ENCODE measurements at regions of chr11 and their contacts with region 1.

Region 1: GRCh38 chr11:47176328-47177228 is at the start of gene ARFGAP2:
- DNase-seq: peak; percentile 93 to 98 (median 96)
- ATAC-seq: peak; percentile 91
- H3K4me3 ChIP-seq: peak within 1 kb of the TSS; percentile 97 to 100
- H3K4me3 Mint-ChIP-seq: peak within 1 kb of the TSS; percentile 94
- H3K27ac ChIP-seq: peak within 1 kb of the TSS; percentile 95 to 98
- H3K27ac Mint-ChIP-seq: peak within 1 kb of the TSS; percentile 98
- H3K4me1 ChIP-seq: peaks cover 28% of the 10 kb centered on the region
- H3K4me1 Mint-ChIP-seq: peaks cover 41% of the 10 kb centered on the region
- H3K27me3 ChIP-seq: no peaks in the 10 kb centered on the region
- H3K27me3 Mint-ChIP-seq: no peaks in the 10 kb centered on the region
- CTCF ChIP-seq: no peak
- total RNA-seq, gene ARFGAP2: 194 to 215 TPM

Region 2: GRCh38 chr11:46593550-46594373 is 582.8 kb before region 1 on chr11 and contains the start of gene AMBRA1:
- CTCF ChIA-PET with region 1: no interaction called
- POLR2A ChIA-PET with region 1: no interaction called
- intact Hi-C with region 1: loop called in 1 of 2 experiments (anchors 10 kb)
- DNase-seq: peak; percentile 70 to 91 (median 81)
- ATAC-seq: peak; percentile 90
- H3K4me3 ChIP-seq: peak within 1 kb of the TSS; percentile 67 to 80
- H3K4me3 Mint-ChIP-seq: peak within 1 kb of the TSS; percentile 98
- H3K27ac ChIP-seq: peak within 1 kb of the TSS; percentile 57 to 67
- H3K27ac Mint-ChIP-seq: peak within 1 kb of the TSS; percentile 96
- H3K4me1 ChIP-seq: peaks cover 32% of the 10 kb centered on the region
- H3K4me1 Mint-ChIP-seq: peaks cover 43% of the 10 kb centered on the region
- H3K27me3 ChIP-seq: no peaks in the 10 kb centered on the region
- H3K27me3 Mint-ChIP-seq: no peaks in the 10 kb centered on the region
- CTCF ChIP-seq: no peak
- total RNA-seq, gene AMBRA1: 31.2 to 34.1 TPM

Region 3: GRCh38 chr11:46686886-46687795 is 489.4 kb before region 1 on chr11:
- CTCF ChIA-PET with region 1: no interaction called
- POLR2A ChIA-PET with region 1: no interaction called
- intact Hi-C with region 1: no loop called
- DNase-seq: no peak
- ATAC-seq: no peak
- H3K4me3 ChIP-seq: no peak overlapping the region
- H3K4me3 Mint-ChIP-seq: no peak overlapping the region
- H3K27ac ChIP-seq: no peak overlapping the region
- H3K27ac Mint-ChIP-seq: peak overlapping the region; percentile 57
- H3K4me1 ChIP-seq: no peaks in the 10 kb centered on the region
- H3K4me1 Mint-ChIP-seq: peaks cover 12% of the 10 kb centered on the region
- H3K27me3 ChIP-seq: no peaks in the 10 kb centered on the region
- H3K27me3 Mint-ChIP-seq: no peaks in the 10 kb centered on the region
- CTCF ChIP-seq: no peak

Region 4: DNA sequence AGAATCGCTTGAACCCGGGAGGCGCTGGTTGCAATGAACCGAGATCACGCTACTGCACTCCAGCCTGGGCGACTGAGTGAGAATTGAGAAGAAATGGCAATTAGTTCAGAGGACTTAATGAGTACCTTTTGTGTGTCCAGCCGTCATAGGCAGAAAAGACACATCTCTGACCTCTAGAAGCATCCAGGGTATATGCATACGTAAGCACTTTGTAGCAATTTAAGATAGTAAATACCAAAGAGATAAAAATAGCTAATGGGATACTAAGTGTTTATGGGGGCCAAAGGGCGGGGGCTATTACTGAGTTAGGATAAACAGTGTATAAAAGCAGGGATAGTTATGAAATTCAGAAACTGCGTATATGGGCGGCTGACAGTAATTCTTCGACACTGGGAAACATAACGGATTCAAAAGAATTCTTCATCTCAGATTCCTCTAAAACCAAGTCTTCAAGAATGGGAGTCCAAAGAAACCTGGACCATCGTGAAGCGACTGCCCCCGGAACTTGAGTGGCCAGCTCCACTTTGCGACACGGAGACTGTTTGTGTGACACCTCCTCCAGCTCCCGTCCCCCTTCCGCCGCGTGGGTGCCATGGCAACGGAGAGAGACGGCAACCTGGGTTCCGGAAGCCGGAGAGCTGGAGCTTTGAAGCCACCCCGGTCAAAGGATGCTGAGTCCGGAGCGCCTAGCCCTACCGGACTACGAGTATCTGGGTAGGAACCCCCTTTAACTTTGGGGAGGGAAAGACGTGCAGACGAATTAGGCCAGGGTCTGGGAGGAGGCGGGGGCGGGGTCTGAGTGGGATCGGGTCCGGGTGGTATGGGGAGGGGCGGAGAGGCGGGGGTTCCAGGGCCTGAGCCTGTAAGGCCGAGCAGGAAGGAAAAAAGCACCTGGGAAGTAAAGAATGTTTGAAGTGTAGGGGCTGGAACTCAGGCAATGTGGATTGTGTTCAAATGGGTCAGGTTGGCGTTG is 240.2 kb before region 1 on chr11 and contains the start of gene CSTPP1:
- CTCF ChIA-PET with region 1: no interaction called
- POLR2A ChIA-PET with region 1: no interaction called
- intact Hi-C with region 1: loop called in 1 of 2 experiments (anchors 2 kb)
- DNase-seq: peak; percentile 80 to 97 (median 93)
- ATAC-seq: peak; percentile 96
- H3K4me3 ChIP-seq: peak within 1 kb of the TSS; percentile 73 to 82
- H3K4me3 Mint-ChIP-seq: peak within 1 kb of the TSS; percentile 97
- H3K27ac ChIP-seq: peak within 1 kb of the TSS; percentile 58 to 71
- H3K27ac Mint-ChIP-seq: peak within 1 kb of the TSS; percentile 95
- H3K4me1 ChIP-seq: peaks cover 9% of the 10 kb centered on the region
- H3K4me1 Mint-ChIP-seq: peaks cover 20% of the 10 kb centered on the region
- H3K27me3 ChIP-seq: no peaks in the 10 kb centered on the region
- H3K27me3 Mint-ChIP-seq: peaks cover 6% of the 10 kb centered on the region
- CTCF ChIP-seq: no peak
- total RNA-seq, gene CSTPP1: 4.1 to 4.6 TPM

Region 5: GRCh38 chr11:47044112-47044511 is 132.5 kb before region 1 on chr11:
- CTCF ChIA-PET with region 1: no interaction called
- POLR2A ChIA-PET with region 1: no interaction called
- intact Hi-C with region 1: no loop called
- DNase-seq: no peak
- ATAC-seq: no peak
- H3K4me3 ChIP-seq: no peak overlapping the region
- H3K4me3 Mint-ChIP-seq: no peak overlapping the region
- H3K27ac ChIP-seq: no peak overlapping the region
- H3K27ac Mint-ChIP-seq: no peak overlapping the region
- H3K4me1 ChIP-seq: no peaks in the 10 kb centered on the region
- H3K4me1 Mint-ChIP-seq: no peaks in the 10 kb centered on the region
- H3K27me3 ChIP-seq: no peaks in the 10 kb centered on the region
- H3K27me3 Mint-ChIP-seq: no peaks in the 10 kb centered on the region
- CTCF ChIP-seq: no peak

Region 6: DNA sequence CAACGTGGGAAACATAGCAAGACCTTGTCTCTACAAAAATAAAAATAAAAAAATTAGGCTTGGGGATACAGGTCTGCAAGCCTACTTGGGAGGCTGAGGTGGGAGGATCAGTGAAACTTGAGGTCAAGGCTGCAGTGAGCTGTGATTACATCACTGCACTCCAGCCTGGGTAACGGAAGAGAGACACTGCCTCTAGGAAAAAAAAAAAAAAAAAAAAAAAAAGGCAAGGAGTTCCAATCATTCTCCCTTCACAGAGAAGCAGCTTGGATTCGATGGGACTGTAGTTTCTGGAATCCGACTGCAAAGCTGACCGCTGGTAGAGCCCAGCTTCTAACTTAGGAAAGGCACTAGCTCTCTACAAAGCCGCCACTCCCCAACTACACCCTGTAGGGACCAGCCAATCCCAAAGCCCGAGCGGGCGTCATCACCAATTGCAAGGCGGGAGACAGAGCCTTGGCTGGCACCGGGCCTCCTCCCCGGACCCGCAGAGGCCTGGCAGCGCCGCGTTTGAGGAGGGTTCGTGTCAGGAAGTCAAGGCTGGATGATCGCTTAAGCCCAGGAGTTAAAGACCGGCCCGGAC is 37.5 kb after region 1 on chr11:
- CTCF ChIA-PET with region 1: interaction called, 16 read pairs
- POLR2A ChIA-PET with region 1: interaction called, 8 read pairs
- intact Hi-C with region 1: loop called (anchors 1 kb)
- DNase-seq: peak; percentile 64 to 90 (median 84)
- ATAC-seq: peak; percentile 67
- H3K4me3 ChIP-seq: peak overlapping the region; percentile 65 to 95
- H3K4me3 Mint-ChIP-seq: peak overlapping the region; percentile 96
- H3K27ac ChIP-seq: peak overlapping the region; percentile 85 to 93
- H3K27ac Mint-ChIP-seq: peak overlapping the region; percentile 97
- H3K4me1 ChIP-seq: peaks cover 16% of the 10 kb centered on the region
- H3K4me1 Mint-ChIP-seq: peaks cover 31% of the 10 kb centered on the region
- H3K27me3 ChIP-seq: no peaks in the 10 kb centered on the region
- H3K27me3 Mint-ChIP-seq: no peaks in the 10 kb centered on the region
- CTCF ChIP-seq: no peak

Region 7: DNA sequence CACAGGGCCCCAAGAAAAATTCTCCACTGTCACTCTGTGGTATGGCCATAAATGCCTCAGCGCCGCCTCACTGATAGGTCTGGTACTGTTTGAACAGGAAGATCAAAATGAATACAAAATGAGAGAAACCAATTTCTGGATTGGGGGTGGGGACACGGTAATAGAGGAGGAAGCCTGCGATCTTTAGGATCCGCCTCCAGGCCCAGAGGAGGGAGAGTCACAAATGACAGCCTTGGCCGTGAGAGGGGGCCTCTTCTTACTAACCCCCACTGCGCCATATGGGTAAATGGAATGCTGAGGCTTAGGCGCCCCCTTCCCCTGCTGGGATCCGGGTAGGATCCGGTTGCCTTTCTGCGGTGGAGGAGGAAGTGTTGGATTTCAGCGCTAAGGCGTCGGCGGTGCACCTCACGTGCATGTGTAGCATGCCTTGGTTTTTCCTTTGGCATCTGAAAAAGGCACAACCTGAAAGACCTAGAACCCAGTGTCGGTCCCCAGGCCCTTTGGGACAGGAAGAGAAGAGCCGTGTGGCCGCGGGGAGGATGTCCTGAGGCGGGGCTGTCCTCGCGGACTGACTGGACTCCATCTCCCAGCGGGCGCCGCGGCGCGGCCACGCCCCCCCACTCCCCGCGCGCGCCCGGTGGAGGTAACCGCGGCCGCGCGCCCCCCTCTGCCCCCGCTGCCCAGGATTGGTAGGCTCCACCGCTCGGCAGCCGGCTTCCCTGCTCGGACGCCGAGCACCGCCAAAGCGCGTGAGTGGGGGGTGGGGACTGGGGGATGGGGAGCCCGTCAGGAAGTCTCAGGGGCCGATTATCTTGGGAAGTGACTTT is 92.6 kb after region 1 on chr11:
- CTCF ChIA-PET with region 1: interaction called, 6 read pairs
- POLR2A ChIA-PET with region 1: interaction called, 3 read pairs
- intact Hi-C with region 1: loop called (anchors 1 kb)
- DNase-seq: peak; percentile 73 to 93 (median 85)
- ATAC-seq: peak; percentile 57
- H3K4me3 ChIP-seq: peak overlapping the region; percentile 71
- H3K4me3 Mint-ChIP-seq: peak overlapping the region; percentile 88
- H3K27ac ChIP-seq: peak overlapping the region; percentile 72 to 92
- H3K27ac Mint-ChIP-seq: peak overlapping the region; percentile 94
- H3K4me1 ChIP-seq: peaks cover 43% of the 10 kb centered on the region
- H3K4me1 Mint-ChIP-seq: peaks cover 53% of the 10 kb centered on the region
- H3K27me3 ChIP-seq: no peaks in the 10 kb centered on the region
- H3K27me3 Mint-ChIP-seq: no peaks in the 10 kb centered on the region
- CTCF ChIP-seq: peak; percentile 4

Region 8: GRCh38 chr11:47454180-47454644 is 277.6 kb after region 1 on chr11:
- CTCF ChIA-PET with region 1: interaction called, 7 read pairs
- POLR2A ChIA-PET with region 1: no interaction called
- intact Hi-C with region 1: loop called (anchors 1 to 2 kb)
- DNase-seq: peak; percentile 36 to 86 (median 61)
- ATAC-seq: peak; percentile 93
- H3K4me3 ChIP-seq: no peak overlapping the region
- H3K4me3 Mint-ChIP-seq: no peak overlapping the region
- H3K27ac ChIP-seq: no peak overlapping the region
- H3K27ac Mint-ChIP-seq: no peak overlapping the region
- H3K4me1 ChIP-seq: no peaks in the 10 kb centered on the region
- H3K4me1 Mint-ChIP-seq: peaks cover 5% of the 10 kb centered on the region
- H3K27me3 ChIP-seq: no peaks in the 10 kb centered on the region
- H3K27me3 Mint-ChIP-seq: no peaks in the 10 kb centered on the region
- CTCF ChIP-seq: peak; percentile 71

Measured in CD8-positive, alpha-beta T cell (primary cell).